Aorta (tissue), 5 donors: ENCODE measurements at regions of chr18 and their contacts with region 1.

Region 1: DNA sequence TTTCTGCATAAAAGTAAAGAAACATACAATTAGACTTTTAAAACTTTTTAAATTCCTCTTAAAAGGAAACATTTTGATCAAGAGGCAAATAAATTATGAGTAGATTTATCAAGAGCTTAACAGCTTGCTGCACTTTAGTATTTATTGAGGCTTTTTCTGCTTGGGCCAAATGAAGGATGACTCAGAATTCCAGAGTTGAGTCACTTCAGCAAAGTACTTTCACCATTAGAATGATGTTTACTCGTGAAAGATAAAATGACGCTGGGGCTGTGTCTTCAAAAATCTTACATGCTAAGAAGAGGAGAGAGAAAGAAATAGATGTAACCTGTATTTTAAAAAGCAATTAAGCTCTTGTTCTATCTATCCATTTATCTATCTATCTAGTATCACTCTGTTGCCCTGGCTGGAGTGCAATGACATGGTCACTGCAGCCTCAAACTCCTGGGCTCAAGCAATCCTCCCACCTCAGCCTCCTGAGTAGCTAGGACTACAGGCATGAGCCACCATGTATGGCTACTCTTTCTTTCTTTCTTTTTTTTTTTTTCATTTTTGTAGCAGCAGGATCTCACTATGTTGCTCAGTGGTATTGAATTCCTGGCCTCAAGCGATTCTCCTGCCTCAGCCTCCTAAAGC is 75.3 kb upstream of the RIOK3 start:
- DNase-seq: no peak
- ATAC-seq: peak; percentile 84
- H3K4me3 ChIP-seq: no peak overlapping the region
- H3K27ac ChIP-seq: peak overlapping the region in 1 of 2 donors; percentile 76
- H3K4me1 ChIP-seq: peaks cover 0 to 4% of the 10 kb centered on the region in 2 donors
- H3K27me3 ChIP-seq: no peaks in the 10 kb centered on the region

Region 2: DNA sequence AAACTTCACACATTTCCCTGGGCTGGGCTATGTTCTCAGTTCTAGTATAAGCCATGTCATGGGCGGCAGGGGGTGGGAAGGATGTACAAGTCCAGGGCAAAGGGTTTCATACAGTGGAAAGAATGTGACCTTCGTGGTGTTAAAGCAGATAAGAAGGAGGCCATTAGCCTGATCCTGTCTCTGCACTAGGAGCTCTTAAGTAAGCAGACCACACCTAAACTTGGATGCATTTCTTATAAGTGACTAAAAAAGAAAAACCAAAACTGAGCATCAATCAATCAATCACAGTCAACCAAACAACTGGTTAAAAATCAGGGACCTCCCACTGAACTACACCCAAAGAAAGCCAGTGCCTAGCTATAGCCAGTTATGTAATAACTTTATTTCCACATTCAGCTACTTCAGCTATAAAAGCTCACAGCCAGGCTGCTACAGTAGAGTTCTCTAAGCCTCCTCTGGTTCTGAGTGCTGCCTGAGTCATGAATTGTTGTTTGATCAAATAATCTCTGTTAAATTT is 28.5 kb after region 1 on chr18:
- intact Hi-C with region 1: loop called in 1 of 2 experiments (anchors 2 kb)
- DNase-seq: no peak
- ATAC-seq: no peak
- H3K4me3 ChIP-seq: no peak overlapping the region
- H3K27ac ChIP-seq: no peak overlapping the region
- H3K4me1 ChIP-seq: no peaks in the 10 kb centered on the region
- H3K27me3 ChIP-seq: no peaks in the 10 kb centered on the region

Region 3: DNA sequence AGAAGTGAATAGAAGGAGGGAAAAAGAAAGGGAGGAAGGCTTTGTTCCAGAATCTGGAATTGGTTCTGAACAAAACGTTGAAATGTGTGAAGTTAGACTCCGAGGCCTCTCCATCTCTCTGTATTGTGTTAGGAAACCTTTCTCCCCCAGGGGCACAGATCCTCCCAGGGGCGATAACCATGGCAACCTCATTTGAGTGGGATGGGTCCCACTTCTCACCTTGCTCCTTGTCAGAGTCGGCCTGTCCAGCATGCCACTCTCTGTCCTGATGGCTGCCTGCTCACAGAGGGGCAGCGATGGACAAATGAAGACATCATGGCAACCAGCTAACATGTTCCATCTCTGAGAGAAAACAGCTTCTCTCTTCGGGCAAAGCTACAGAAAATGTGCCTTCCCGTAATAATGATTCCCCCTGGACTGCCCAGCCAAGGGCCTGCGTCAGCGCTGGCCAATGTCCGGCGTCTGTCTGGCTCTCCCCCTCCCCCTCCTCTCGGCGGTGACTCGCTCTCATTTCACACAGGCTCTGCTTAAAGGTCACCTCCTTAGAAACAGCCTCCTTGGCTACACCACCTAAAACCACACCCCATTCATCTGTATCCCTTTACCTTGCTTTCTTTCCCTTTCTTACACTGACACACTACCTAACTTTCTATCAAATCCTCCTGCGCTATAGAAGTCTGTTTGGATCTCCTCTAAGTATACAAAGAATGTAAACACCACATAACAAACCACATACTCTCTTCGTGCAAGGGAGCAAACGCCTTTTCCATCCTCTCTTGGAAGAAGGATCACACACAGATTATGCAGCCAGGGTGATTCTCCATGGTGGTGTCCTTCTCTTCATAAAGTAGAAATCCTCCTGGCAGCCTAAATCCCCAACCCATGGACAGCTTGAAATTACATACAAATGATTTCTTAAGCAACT is 604.6 kb after region 1 on chr18:
- intact Hi-C with region 1: no loop called
- DNase-seq: peak; percentile 87 to 92
- ATAC-seq: peak; percentile 86
- H3K4me3 ChIP-seq: no peak overlapping the region
- H3K27ac ChIP-seq: no peak overlapping the region
- H3K4me1 ChIP-seq: no peaks in the 10 kb centered on the region
- H3K27me3 ChIP-seq: no peaks in the 10 kb centered on the region